Heart left ventricle (tissue), 16 donors: ENCODE measurements at regions of chr22 and their contacts with region 1.

Region 1: DNA sequence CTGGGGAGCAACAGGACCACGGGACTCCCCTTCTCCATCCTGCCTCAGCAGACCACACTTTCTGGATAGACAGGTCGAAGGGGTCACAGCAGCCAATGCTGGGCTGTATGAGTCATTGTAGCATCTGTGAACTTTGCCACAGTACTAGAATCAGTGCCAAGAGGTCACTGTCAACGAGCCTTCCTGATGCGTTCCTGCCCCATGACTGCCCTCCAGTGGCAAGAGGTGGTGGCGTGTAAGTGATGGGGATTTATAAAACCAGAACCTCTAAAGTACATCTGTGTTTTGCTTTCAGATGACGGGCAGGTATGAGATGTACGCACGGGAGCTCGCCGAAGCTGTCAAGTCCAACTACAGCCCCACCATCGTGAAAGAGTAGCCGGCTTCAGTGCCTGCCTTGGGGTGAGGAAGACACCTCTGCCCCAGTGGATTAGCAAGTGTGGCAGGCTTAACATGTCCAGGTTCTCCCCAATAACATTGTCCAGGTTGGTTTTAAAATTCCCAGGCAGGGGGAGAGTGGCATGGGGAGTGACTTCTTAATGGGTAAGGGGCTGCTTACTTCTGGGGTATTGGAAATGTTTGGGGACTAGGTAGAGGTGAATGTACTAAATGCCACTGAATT is 29.4 kb downstream of the GUCD1 start:
- DNase-seq: peak; percentile 66 to 84 (median 76)
- ATAC-seq: peak in 3 of 4 donors; percentile 83 to 86 (median 86)
- H3K4me3 ChIP-seq: no peak overlapping the region
- H3K27ac ChIP-seq: no peak overlapping the region
- H3K4me1 ChIP-seq: peaks cover 0 to 27% (median 11%) of the 10 kb centered on the region in 12 donors
- H3K27me3 ChIP-seq: no peaks in the 10 kb centered on the region
- CTCF ChIP-seq: peak; percentile 73 to 90 (median 84)
- POLR2A ChIP-seq: no peak

Region 2: DNA sequence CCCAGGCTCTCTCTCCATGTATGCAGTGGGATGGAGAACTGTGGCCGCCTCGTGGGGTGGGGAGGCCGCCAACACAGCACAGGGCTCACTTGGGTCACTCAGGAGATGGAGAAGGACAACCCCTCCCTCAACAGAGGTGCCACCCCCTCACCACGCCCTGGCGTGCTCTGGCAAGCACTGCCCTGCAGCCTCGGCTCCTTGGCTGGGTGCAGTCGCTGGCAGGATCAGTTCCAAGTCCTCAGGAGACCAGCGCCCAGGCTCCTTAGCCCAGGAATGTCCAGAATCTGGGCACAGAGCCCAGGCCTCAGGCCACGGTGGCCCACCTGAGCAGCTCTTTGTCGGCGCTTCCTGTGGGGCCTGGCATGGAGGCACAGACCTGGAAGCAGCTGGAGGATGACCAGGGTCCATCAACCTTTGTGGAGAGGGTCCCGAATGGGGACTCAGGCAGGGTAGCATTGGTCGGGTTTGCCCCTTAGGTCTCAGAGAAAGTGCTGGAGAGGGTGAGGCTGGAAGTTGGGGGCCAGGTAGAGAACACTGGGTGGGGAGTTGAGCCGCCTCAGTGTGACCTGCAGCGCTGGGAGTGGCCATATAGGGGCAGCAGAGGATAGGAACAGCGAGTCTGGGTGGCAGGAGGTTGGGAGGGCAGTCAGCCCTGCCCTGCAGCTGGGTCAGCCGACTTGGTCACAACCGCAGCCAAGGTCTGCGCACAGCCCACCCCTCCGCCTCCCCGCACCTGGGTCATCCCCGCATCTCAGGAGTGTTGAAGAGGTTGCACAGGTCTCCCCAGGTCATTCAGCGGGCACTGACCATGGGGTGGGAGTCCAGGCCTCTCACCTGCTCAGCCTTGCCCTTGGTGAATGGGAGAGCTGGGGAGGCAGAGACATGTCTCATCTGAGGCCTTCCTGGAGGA is 336.0 kb before region 1 on chr22:
- intact Hi-C with region 1: loop called in 4 of 10 experiments (anchors 5 to 10 kb)
- DNase-seq: peak; percentile 75 to 86 (median 77)
- ATAC-seq: peak; percentile 75 to 92 (median 88)
- H3K4me3 ChIP-seq: no peak overlapping the region
- H3K27ac ChIP-seq: peak overlapping the region in 1 of 12 donors; percentile 30
- H3K4me1 ChIP-seq: peaks cover 0 to 20% (median 11%) of the 10 kb centered on the region in 12 donors
- H3K27me3 ChIP-seq: no peaks in the 10 kb centered on the region
- CTCF ChIP-seq: peak; percentile 83 to 95 (median 90)
- POLR2A ChIP-seq: no peak

Region 3: GRCh38 chr22:24270638-24271408 is 254.7 kb before region 1 on chr22 and contains the start of gene SPECC1L:
- intact Hi-C with region 1: loop called in 1 of 10 experiments (anchors 5 kb)
- DNase-seq: peak; percentile 93 to 98 (median 96)
- ATAC-seq: peak; percentile 91 to 98 (median 96)
- H3K4me3 ChIP-seq: peak within 1 kb of the TSS; percentile 61 to 99 (median 85)
- H3K27ac ChIP-seq: peak within 1 kb of the TSS; percentile 88 to 99 (median 95)
- H3K4me1 ChIP-seq: peaks cover 7 to 42% (median 32%) of the 10 kb centered on the region in 12 donors
- H3K27me3 ChIP-seq: no peaks in the 10 kb centered on the region
- CTCF ChIP-seq: peak in 10 of 12 donors; percentile 13 to 68 (median 38)
- POLR2A ChIP-seq: peak; percentile 76 to 96
- total RNA-seq, gene SPECC1L: 25.4 to 65.3 (median 52.8) TPM

Region 4: GRCh38 chr22:24333301-24333700 is 192.2 kb before region 1 on chr22:
- intact Hi-C with region 1: loop called in 3 of 10 experiments (anchors 5 kb)
- DNase-seq: no peak
- ATAC-seq: no peak
- H3K4me3 ChIP-seq: no peak overlapping the region
- H3K27ac ChIP-seq: no peak overlapping the region
- H3K4me1 ChIP-seq: peaks cover 0 to 48% (median 0%) of the 10 kb centered on the region in 12 donors
- H3K27me3 ChIP-seq: no peaks in the 10 kb centered on the region
- CTCF ChIP-seq: no peak
- POLR2A ChIP-seq: no peak

Region 5: DNA sequence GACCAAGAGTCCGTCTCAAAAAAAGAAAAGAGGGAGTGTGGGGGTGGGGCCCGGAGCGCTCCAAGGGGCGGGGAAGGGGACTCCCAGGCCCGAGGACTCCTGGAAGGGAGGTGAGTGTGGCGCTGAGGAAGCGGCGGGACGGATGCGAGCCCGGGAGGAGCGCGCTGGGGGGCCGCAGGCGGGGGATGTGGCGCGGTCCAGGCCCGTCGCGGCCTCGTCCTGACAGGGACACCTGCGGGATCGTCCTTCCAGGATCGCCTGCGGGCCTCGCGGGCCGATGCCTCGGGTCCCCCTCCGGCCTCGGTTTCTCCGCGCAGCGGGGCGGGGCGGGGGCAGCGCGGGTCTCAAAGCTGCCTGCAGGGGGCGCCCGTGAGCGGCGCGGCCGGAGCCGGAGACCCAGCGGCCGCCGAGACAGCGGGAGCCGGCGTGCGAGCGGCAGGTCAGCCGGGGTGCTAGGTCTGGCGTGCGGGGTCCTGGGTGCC is 102.0 kb before region 1 on chr22:
- intact Hi-C with region 1: loop called in 5 of 10 experiments (anchors 2 to 5 kb)
- DNase-seq: peak; percentile 62 to 88 (median 73)
- ATAC-seq: peak in 3 of 4 donors; percentile 18 to 80 (median 69)
- H3K4me3 ChIP-seq: peak overlapping the region; percentile 56 to 96 (median 71)
- H3K27ac ChIP-seq: peak overlapping the region in 10 of 12 donors; percentile 36 to 88 (median 70)
- H3K4me1 ChIP-seq: peaks cover 0 to 86% (median 43%) of the 10 kb centered on the region in 12 donors
- H3K27me3 ChIP-seq: no peaks in the 10 kb centered on the region
- CTCF ChIP-seq: peak; percentile 76 to 98 (median 92)
- POLR2A ChIP-seq: no peak

Region 6: GRCh38 chr22:24433813-24434470 is 91.6 kb before region 1 on chr22:
- intact Hi-C with region 1: loop called in 2 of 10 experiments (anchors 5 kb)
- DNase-seq: peak in 2 of 5 donors; percentile 49 to 56
- ATAC-seq: peak in 3 of 4 donors; percentile 16 to 33 (median 21)
- H3K4me3 ChIP-seq: no peak overlapping the region
- H3K27ac ChIP-seq: peak overlapping the region in 11 of 12 donors; percentile 30 to 82 (median 68)
- H3K4me1 ChIP-seq: peaks cover 6 to 87% (median 64%) of the 10 kb centered on the region in 12 donors
- H3K27me3 ChIP-seq: no peaks in the 10 kb centered on the region
- CTCF ChIP-seq: no peak
- POLR2A ChIP-seq: no peak

Region 7: GRCh38 chr22:24450610-24451009 is 74.9 kb before region 1 on chr22:
- intact Hi-C with region 1: no loop called
- DNase-seq: peak in 2 of 5 donors; percentile 52 to 67
- ATAC-seq: peak; percentile 25 to 79 (median 72)
- H3K4me3 ChIP-seq: no peak overlapping the region
- H3K27ac ChIP-seq: peak overlapping the region in 8 of 12 donors; percentile 2 to 62 (median 33)
- H3K4me1 ChIP-seq: peaks cover 1 to 37% (median 21%) of the 10 kb centered on the region in 12 donors
- H3K27me3 ChIP-seq: no peaks in the 10 kb centered on the region
- CTCF ChIP-seq: no peak
- POLR2A ChIP-seq: no peak